ENCODE measurements at regions of chr19 and their contacts with region 1.

Region 1: GRCh38 chr19:19488875-19489690 is 26.3 kb downstream of the TSSK6 start:
- DNase-seq: peak; percentile 79
- H3K4me3 ChIP-seq: peak overlapping the region in 1 of 4 donors; percentile 31
- H3K27ac ChIP-seq: peak overlapping the region; percentile 71 to 84 (median 80)
- H3K4me1 ChIP-seq: peaks cover 15 to 49% (median 42%) of the 10 kb centered on the region in 4 donors
- H3K27me3 ChIP-seq: no peaks in the 10 kb centered on the region
- CTCF ChIP-seq: no peak
- EP300 ChIP-seq: no peak
- POLR2A ChIP-seq: peak; percentile 20

Region 2: DNA sequence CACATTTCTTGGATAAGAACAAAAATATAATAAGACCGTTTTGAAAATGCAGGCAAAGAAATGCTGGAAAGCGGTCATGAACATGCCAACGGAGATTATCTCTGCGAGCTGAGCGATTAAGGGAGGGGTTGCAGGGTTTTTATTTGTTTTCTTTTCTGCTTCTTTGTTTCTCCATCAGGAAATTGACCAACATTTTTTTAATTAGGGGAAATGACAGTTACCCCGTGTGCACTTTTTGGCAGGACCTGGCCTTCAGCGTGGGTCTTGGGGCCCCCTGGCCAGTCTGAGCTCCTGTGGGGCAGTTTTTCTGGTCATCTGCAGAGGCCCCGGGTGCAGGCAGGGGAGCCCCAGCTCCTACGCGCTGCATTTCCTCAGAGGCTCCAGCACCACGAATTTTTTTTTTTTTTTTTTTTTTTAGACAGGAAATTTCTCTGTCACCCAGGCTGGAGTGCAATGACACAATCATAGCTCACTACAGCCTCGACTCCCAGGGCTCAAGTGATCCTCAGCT is 516.7 kb before region 1 on chr19:
- in situ Hi-C with region 1: no loop called
- intact Hi-C with region 1: no loop called
- DNase-seq: no peak
- H3K4me3 ChIP-seq: no peak overlapping the region
- H3K27ac ChIP-seq: peak overlapping the region in 1 of 4 donors; percentile 20
- H3K4me1 ChIP-seq: peaks cover 0 to 19% (median 12%) of the 10 kb centered on the region in 4 donors
- H3K27me3 ChIP-seq: no peaks in the 10 kb centered on the region
- CTCF ChIP-seq: no peak
- EP300 ChIP-seq: no peak
- POLR2A ChIP-seq: no peak

Region 3: DNA sequence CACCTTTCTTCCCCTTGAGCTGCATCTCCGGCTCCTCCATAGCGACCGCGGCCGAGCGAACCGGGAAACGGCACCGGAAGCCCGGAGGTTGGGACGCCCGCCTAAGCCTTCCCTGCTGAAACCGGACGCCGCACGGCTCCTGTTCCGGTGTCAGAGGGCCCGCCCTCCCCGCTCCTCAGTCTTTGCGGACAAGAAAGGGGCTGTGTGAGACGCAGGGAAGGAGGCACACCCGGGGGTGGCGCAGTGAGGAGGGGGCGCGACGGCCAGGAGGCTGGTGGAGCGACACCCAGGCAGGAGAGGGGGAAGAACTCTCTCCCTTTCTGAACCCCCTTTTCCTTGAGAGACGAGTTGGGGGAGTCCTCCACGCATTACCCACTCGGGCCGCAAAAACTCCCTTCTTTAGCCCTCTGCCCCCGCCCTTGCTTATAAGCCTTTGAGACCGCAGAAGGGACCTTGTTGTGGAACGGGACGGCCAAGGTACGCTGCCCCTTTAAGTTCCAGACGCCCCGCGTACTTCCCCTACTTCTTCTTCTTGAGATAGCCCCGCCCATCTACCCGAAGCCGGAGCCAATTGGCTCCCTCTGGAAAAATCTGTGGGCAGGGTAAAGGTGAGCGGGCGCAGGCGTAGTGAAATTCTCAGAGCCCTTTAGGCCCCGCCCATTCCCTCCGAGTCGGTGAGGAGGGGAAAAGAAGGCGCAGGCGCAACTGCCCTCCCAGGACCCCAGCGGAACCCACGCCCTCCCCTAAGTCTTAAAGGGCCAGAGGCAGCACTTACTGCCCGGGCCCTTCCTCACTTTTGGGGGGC is 296.8 kb before region 1 on chr19 and contains the starts of genes BORCS8 and RFXANK:
- in situ Hi-C with region 1: loop called in 1 of 4 experiments (anchors 25 kb)
- intact Hi-C with region 1: no loop called
- DNase-seq: peak; percentile 100
- H3K4me3 ChIP-seq: peak within 1 kb of the TSS; percentile 72 to 95 (median 91)
- H3K27ac ChIP-seq: peak within 1 kb of the TSS; percentile 98 to 100 (median 99)
- H3K4me1 ChIP-seq: peaks cover 6 to 48% (median 40%) of the 10 kb centered on the region in 4 donors
- H3K27me3 ChIP-seq: no peaks in the 10 kb centered on the region
- CTCF ChIP-seq: peak in 1 of 5 experiments; percentile 24
- EP300 ChIP-seq: no peak
- POLR2A ChIP-seq: peak; percentile 69
- total RNA-seq, gene BORCS8: 13.0 to 132 (median 26.6) TPM
- total RNA-seq, gene RFXANK: 35.9 to 51.1 (median 48.6) TPM

Region 4: GRCh38 chr19:19361075-19361594 is 127.9 kb before region 1 on chr19:
- in situ Hi-C with region 1: loop called in 3 of 4 experiments (anchors 5 to 25 kb)
- intact Hi-C with region 1: loop called (anchors 2 kb)
- DNase-seq: peak; percentile 81
- H3K4me3 ChIP-seq: no peak overlapping the region
- H3K27ac ChIP-seq: peak overlapping the region in 1 of 4 donors; percentile 19
- H3K4me1 ChIP-seq: peaks cover 4 to 25% (median 12%) of the 10 kb centered on the region in 4 donors
- H3K27me3 ChIP-seq: no peaks in the 10 kb centered on the region
- CTCF ChIP-seq: peak; percentile 79 to 92 (median 86)
- EP300 ChIP-seq: no peak
- POLR2A ChIP-seq: peak; percentile 12

Region 5: DNA sequence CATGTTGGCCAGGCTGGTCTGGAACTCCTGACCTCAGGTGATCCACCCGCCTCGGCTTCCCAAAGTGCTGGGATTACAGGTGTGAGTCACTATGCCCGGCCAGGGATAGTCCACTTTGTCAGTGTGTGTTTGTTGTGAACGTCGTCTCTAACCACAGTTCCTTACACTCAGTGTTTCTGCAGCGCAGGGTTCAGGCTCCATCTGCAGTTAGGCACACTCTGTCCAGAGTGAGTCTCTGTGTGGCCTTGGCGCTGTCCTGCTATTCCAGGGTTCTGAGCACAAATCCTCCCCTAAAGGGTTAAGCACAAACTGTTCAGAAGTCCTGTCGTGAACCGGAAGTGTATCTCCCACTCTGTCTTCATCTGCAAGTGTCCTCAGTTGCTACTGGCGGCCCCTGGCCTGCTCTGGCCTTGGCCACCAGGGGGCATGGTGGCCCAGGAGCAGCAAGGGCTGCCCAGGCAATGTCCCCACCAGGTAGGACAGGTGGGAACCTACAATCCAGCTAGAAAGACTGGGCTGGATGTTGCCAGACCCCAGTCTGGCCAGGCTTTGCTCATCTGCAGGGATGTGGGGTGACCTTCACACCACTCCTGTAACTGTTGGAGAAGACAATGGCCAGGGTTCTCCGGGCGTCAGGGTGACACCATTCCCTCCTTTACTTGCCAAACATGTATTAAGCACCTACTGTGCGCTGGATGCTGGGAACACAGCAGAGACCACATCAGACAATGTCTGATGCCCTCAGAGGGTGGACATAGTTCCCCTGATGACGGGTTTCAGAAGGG is 122.3 kb before region 1 on chr19:
- in situ Hi-C with region 1: loop called (anchors 5 to 25 kb)
- intact Hi-C with region 1: loop called (anchors 2 kb)
- DNase-seq: peak; percentile 86
- H3K4me3 ChIP-seq: peak overlapping the region in 1 of 4 donors; percentile 6
- H3K27ac ChIP-seq: peak overlapping the region; percentile 45 to 73 (median 66)
- H3K4me1 ChIP-seq: peaks cover 7 to 34% (median 19%) of the 10 kb centered on the region in 4 donors
- H3K27me3 ChIP-seq: no peaks in the 10 kb centered on the region
- CTCF ChIP-seq: peak; percentile 95 to 98 (median 97)
- EP300 ChIP-seq: no peak
- POLR2A ChIP-seq: no peak

Region 6: GRCh38 chr19:19372656-19373416 is 116.2 kb before region 1 on chr19:
- in situ Hi-C with region 1: loop called (anchors 5 to 25 kb)
- intact Hi-C with region 1: loop called (anchors 2 kb)
- DNase-seq: peak; percentile 86
- H3K4me3 ChIP-seq: no peak overlapping the region
- H3K27ac ChIP-seq: peak overlapping the region; percentile 80 to 88 (median 84)
- H3K4me1 ChIP-seq: peaks cover 13 to 46% (median 22%) of the 10 kb centered on the region in 4 donors
- H3K27me3 ChIP-seq: no peaks in the 10 kb centered on the region
- CTCF ChIP-seq: no peak
- EP300 ChIP-seq: no peak
- POLR2A ChIP-seq: peak; percentile 75

Region 7: DNA sequence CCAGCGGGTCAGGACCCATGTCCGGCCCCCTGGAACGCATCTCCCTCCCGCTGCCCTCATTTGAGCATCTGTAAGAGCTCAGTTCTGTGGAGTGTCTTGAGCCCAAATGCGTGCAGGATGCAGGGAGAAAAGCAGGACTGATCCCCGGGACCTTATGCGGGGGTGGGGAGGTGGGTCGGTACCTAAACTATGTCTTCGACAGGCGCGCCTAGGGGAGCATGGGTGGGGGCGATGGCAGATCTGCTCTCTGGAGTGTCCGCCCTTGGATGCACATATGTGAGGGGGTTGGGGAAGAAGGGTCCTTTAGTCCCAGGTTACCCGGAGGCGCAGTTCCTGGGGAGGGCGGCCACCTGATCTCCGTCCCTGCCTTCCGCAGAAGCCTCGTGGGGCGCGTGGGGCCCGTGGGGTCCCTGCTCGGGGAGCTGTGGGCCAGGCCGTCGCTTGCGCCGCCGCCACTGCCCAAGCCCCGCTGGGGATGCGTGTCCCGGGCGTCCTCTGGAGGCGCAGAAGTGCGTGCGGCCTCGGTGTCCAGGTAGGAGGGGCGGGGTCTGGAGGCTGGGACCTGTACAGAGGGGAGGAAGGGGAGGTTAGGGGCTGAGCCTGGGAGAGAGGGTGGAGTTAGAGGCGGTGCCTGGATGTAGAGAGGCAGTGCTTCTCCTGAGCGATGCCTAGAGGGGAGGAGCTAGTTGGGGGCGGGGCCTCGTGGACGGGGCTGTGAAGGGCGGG is 51.8 kb after region 1 on chr19:
- in situ Hi-C with region 1: no loop called
- intact Hi-C with region 1: no loop called
- DNase-seq: peak; percentile 66
- H3K4me3 ChIP-seq: peak overlapping the region in 2 of 4 donors; percentile 15 to 19
- H3K27ac ChIP-seq: no peak overlapping the region
- H3K4me1 ChIP-seq: peaks cover 16 to 35% (median 27%) of the 10 kb centered on the region in 4 donors
- H3K27me3 ChIP-seq: peaks cover 74% of the 10 kb centered on the region
- CTCF ChIP-seq: no peak
- EP300 ChIP-seq: no peak
- POLR2A ChIP-seq: no peak